ENCODE measurements at regions of chr1 and their contacts with region 1.

Region 1: DNA sequence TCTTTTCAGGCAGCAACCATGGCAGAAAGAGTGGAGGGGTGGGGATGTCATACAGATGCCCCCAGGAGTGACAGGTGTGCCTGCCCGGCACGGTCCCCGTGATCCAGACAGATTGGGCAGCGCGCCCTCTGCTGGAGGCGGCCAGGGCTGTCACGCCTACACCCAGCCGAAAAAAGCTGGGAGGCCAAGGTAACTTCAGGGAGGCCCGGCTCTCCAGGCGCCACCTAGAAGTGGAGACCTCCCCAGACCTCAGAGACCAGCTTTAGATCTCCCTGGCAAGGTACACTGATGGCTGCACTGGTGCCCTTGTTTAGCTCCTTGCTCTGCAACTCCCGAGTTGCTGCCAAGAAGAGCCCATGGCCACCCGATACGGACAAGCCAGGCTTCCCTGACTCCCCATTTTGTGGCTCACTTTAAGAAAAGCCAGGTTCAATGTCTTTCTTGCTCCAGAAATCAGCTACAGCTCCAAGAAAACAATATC is 6.6 kb downstream of the GOLT1A start:
- DNase-seq: peak; percentile 91
- H3K27ac ChIP-seq: no peak overlapping the region
- CTCF ChIP-seq: peak; percentile 95

Region 2: GRCh38 chr1:203861379-203862184 is 345.6 kb before region 1 on chr1 and contains the start of gene SNRPE:
- CTCF ChIA-PET with region 1: interaction called, 13 read pairs
- POLR2A ChIA-PET with region 1: no interaction called
- DNase-seq: peak; percentile 98
- H3K27ac ChIP-seq: peak within 1 kb of the TSS; percentile 99
- CTCF ChIP-seq: peak; percentile 96

Region 3: GRCh38 chr1:204180133-204180532 is 27.0 kb before region 1 on chr1:
- CTCF ChIA-PET with region 1: interaction called, 11 read pairs
- POLR2A ChIA-PET with region 1: no interaction called
- DNase-seq: no peak
- H3K27ac ChIP-seq: no peak overlapping the region
- CTCF ChIP-seq: no peak

Region 4: GRCh38 chr1:204190212-204191211 is 16.7 kb before region 1 on chr1:
- CTCF ChIA-PET with region 1: interaction called, 37 read pairs
- POLR2A ChIA-PET with region 1: no interaction called
- DNase-seq: peak; percentile 55
- H3K27ac ChIP-seq: no peak overlapping the region
- CTCF ChIP-seq: no peak

Region 5: GRCh38 chr1:204219971-204220608 is 12.9 kb after region 1 on chr1:
- CTCF ChIA-PET with region 1: interaction called, 35 read pairs
- POLR2A ChIA-PET with region 1: no interaction called
- DNase-seq: no peak
- H3K27ac ChIP-seq: no peak overlapping the region
- CTCF ChIP-seq: no peak

Region 6: DNA sequence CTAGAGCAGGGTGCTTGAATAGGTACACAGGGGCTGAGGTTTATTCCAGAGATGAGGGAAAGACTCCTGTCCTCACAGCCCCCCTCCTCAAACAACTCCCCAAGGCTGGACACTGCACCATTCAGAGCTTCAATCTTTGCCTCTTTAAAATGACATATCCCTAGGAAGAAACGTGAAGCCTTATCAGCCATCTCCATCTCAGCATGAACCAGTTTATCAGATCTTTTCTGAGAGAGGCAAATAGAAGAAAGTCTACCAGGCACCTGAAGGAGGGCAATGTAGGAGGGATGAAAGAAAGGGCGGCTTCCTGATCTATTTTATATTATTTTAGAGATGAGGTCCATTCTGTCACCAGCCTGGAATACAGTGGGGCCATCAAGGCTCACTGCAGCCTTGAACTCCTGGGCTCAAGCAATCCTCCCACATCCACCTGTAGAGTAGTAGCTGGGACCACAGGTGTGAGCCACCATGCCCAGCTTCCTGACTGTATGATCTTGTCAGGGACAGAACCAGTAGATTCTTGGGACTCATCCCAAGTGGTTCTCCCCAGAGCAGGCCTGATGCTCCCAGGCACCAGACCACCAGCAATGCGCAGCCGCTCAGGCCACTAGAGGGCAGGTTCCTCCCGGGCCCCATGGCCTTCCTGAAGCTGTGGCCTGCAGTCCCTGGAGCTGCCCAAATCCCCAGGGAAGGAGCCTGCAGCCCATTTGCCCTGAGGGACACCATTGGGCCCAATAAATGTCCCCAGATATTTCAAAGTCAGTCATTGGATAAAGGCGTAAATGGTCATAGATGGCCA is 51.0 kb after region 1 on chr1:
- CTCF ChIA-PET with region 1: interaction called, 20 read pairs
- POLR2A ChIA-PET with region 1: no interaction called
- DNase-seq: peak; percentile 82
- H3K27ac ChIP-seq: no peak overlapping the region
- CTCF ChIP-seq: peak; percentile 51

Region 7: GRCh38 chr1:204377795-204378608 is 170.8 kb after region 1 on chr1:
- CTCF ChIA-PET with region 1: interaction called, 14 read pairs
- POLR2A ChIA-PET with region 1: no interaction called
- DNase-seq: peak; percentile 56
- H3K27ac ChIP-seq: no peak overlapping the region
- CTCF ChIP-seq: no peak